ENCODE measurements at regions of chr12 and their contacts with region 1.

Region 1: GRCh38 chr12:56359851-56360767 is at the start of gene STAT2:
- DNase-seq: peak; percentile 100
- H3K4me3 Mint-ChIP-seq: peak within 1 kb of the TSS; percentile 89
- H3K27ac Mint-ChIP-seq: peak within 1 kb of the TSS; percentile 94
- H3K4me1 Mint-ChIP-seq: peaks cover 19% of the 10 kb centered on the region
- H3K27me3 Mint-ChIP-seq: no peaks in the 10 kb centered on the region
- total RNA-seq, gene STAT2: 125 to 139 TPM

Region 2: DNA sequence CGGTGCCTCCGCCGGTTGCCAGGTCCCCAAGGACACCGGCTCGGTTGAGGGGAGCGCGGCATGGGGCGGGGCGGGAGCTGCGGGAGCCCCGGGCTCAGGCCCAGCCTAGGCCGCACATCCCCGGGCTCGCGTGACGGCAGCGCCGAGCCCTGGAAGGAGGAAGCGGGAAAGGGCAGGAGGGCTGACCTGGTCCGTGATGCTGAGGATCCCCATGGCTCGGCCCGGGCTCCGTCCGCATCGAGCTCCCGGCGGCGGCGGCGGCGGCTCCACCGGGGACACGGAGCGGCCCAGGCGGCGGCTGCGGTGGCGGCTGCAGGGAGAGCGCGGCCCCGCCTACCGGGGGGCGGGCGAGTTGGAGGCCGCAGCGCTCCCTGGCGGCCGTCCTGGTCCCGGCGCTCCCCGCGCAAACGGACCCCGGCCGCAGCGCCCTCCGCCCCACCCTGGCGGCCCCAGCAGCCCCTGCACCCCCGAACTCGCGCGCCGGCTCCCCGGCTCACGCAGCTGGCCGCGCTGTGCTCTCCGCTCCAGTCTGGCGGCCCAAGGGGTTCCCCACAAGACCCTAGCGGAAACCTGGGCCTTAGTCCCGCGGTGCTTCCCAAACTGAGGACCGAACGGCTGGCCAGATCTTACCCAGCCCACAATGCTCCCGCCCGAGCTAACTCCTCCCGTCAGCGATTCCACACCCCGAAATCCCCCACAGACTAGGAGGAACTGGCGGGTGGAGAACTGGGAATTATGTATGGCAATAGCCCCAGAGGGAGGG is 101.9 kb before region 1 on chr12 and contains the start of gene ANKRD52:
- CTCF ChIA-PET with region 1: interaction called, 3 read pairs
- POLR2A ChIA-PET with region 1: interaction called, 3 read pairs
- intact Hi-C with region 1: loop called (anchors 2 kb)
- DNase-seq: peak; percentile 82
- H3K4me3 Mint-ChIP-seq: peak within 1 kb of the TSS; percentile 87
- H3K27ac Mint-ChIP-seq: peak within 1 kb of the TSS; percentile 81
- H3K4me1 Mint-ChIP-seq: peaks cover 19% of the 10 kb centered on the region
- H3K27me3 Mint-ChIP-seq: no peaks in the 10 kb centered on the region
- total RNA-seq, gene ANKRD52: 34.1 to 37.0 TPM

Region 3: GRCh38 chr12:56299853-56300643 is 60.1 kb before region 1 on chr12 and contains the start of gene CS:
- CTCF ChIA-PET with region 1: interaction called, 4 read pairs
- POLR2A ChIA-PET with region 1: interaction called, 3 read pairs
- intact Hi-C with region 1: loop called (anchors 2 kb)
- DNase-seq: peak; percentile 99
- H3K4me3 Mint-ChIP-seq: peak within 1 kb of the TSS; percentile 98
- H3K27ac Mint-ChIP-seq: peak within 1 kb of the TSS; percentile 98
- H3K4me1 Mint-ChIP-seq: peaks cover 46% of the 10 kb centered on the region
- H3K27me3 Mint-ChIP-seq: no peaks in the 10 kb centered on the region
- total RNA-seq, gene CS: 304 to 309 TPM

Region 4: GRCh38 chr12:56315622-56316473 is 44.3 kb before region 1 on chr12 and contains the start of gene CNPY2:
- CTCF ChIA-PET with region 1: interaction called, 7 read pairs
- POLR2A ChIA-PET with region 1: interaction called, 15 read pairs
- intact Hi-C with region 1: loop called (anchors 1 kb)
- DNase-seq: peak; percentile 95
- H3K4me3 Mint-ChIP-seq: peak within 1 kb of the TSS; percentile 98
- H3K27ac Mint-ChIP-seq: peak within 1 kb of the TSS; percentile 97
- H3K4me1 Mint-ChIP-seq: peaks cover 16% of the 10 kb centered on the region
- H3K27me3 Mint-ChIP-seq: no peaks in the 10 kb centered on the region
- total RNA-seq, gene CNPY2: 74.7 to 91.6 TPM

Region 5: GRCh38 chr12:56333679-56334489 is 26.2 kb before region 1 on chr12 and contains the start of gene PAN2:
- CTCF ChIA-PET with region 1: interaction called, 13 read pairs
- POLR2A ChIA-PET with region 1: interaction called, 58 read pairs
- intact Hi-C with region 1: loop called (anchors 1 kb)
- DNase-seq: peak; percentile 97
- H3K4me3 Mint-ChIP-seq: peak within 1 kb of the TSS; percentile 94
- H3K27ac Mint-ChIP-seq: peak within 1 kb of the TSS; percentile 99
- H3K4me1 Mint-ChIP-seq: peaks cover 43% of the 10 kb centered on the region
- H3K27me3 Mint-ChIP-seq: no peaks in the 10 kb centered on the region
- total RNA-seq, gene PAN2: 49.0 to 51.2 TPM

Region 6: DNA sequence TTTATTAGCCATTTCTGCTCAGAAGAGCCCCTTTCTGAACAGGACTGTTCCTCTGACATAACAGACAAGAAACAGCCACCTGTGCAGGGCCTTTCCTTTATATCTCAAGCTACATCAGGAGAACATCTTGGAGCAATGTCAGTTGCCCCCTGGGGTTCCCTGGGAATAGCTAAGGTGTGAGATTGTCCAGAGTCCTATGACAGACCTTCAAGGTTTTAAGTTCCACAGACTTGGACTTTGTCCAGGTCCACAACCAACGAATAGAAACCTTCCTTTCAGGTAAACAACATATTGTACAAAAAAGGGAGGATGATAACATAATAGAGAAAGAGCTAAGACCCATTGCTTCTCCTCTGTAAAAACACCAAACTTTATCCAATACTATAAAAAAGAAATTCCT is 18.5 kb before region 1 on chr12:
- CTCF ChIA-PET with region 1: interaction called, 9 read pairs
- POLR2A ChIA-PET with region 1: interaction called, 58 read pairs
- intact Hi-C with region 1: loop called (anchors 1 kb)
- DNase-seq: no peak
- H3K4me3 Mint-ChIP-seq: no peak overlapping the region
- H3K27ac Mint-ChIP-seq: peak overlapping the region; percentile 32
- H3K4me1 Mint-ChIP-seq: peaks cover 40% of the 10 kb centered on the region
- H3K27me3 Mint-ChIP-seq: no peaks in the 10 kb centered on the region

Region 7: DNA sequence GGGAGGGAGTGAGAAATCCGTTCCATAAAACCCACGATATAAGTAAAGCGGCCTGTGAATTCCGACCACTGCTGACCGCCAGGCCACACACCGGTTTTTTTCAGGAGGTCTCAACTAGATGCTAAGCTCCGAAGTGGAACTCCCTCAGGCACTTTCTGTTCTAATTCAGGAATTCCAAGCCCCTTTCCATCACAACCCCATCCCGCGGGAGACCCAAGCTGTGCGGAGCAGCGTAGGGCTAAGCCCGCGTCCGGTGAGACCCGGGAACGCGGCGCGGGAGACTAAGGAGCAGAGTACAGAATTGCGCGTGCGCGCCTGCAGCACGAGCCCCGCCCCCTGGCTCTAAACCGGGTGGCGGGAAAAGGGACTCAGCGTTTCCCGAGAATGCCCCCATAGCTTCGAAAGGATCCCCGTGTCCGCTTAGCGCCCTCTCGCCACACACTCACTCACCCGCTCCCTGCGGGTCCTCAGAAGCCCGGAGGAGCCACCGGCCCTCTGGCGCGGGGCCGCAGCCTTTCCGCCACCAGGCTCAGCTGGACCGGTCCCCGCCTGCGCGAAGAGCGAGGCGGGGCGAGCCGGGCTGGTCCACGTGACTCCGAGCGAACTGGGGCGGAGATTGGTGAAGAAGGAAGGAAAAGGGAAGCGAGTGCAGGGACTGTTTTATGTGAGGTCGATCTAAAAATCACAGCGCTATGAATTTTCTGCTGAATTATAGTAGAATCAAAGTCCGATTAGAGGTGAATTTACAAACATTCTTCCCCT is 88.9 kb after region 1 on chr12 and contains the start of gene TIMELESS:
- CTCF ChIA-PET with region 1: interaction called, 5 read pairs
- POLR2A ChIA-PET with region 1: interaction called, 17 read pairs
- intact Hi-C with region 1: loop called (anchors 1 kb)
- DNase-seq: peak; percentile 92
- H3K4me3 Mint-ChIP-seq: peak within 1 kb of the TSS; percentile 88
- H3K27ac Mint-ChIP-seq: peak within 1 kb of the TSS; percentile 93
- H3K4me1 Mint-ChIP-seq: peaks cover 18% of the 10 kb centered on the region
- H3K27me3 Mint-ChIP-seq: no peaks in the 10 kb centered on the region
- total RNA-seq, gene TIMELESS: 60.1 to 62.6 TPM

Region 8: DNA sequence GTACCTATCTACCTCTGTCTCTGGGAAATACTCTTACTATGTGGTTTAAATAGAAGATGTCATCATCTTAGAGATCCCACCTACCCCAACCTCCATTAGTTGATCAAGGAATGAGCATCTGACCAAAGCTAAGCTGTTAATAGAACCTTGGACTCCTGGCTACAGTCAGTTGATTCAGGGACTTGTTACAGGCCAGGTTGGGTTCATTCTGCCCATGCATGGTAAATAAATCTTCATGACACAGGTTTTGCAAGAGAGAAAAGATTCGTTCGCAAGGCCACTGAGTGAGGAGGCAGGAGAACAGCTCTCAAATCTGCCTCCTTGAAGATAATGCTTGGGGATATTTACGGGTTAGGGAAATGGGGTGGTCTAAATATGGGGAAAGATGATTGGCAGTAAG is 554.6 kb after region 1 on chr12:
- CTCF ChIA-PET with region 1: no interaction called
- POLR2A ChIA-PET with region 1: no interaction called
- intact Hi-C with region 1: no loop called
- DNase-seq: no peak
- H3K4me3 Mint-ChIP-seq: no peak overlapping the region
- H3K27ac Mint-ChIP-seq: no peak overlapping the region
- H3K4me1 Mint-ChIP-seq: no peaks in the 10 kb centered on the region
- H3K27me3 Mint-ChIP-seq: peaks cover 9% of the 10 kb centered on the region

Measured in activated CD4-positive, alpha-beta memory T cell treated with anti-CD3 and anti-CD28 coated beads for 36 hours (primary cell).